GM12878 (cell line): ENCODE measurements at regions of chr16 and their contacts with region 1.

Region 1: DNA sequence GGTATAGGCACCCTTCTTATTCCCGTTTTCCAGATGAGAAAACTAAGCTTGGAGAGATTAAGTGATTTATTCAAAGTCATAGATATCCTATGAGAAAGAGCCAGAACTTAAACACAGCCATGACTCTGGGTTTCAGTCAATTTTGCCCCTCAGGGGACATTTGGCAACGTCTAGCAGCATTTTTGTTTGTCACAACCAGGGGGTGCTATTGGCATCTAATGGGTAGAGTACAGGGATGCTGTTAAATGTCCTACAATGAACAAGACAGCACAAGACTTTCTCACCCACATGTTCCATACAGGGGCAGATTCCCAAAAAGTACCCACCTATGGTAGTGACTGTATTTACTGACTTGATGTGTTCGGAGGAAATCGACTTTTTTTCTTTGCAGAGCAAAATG is 4.8 kb upstream of the SHISA9 start:
- DNase-seq: no peak
- ATAC-seq: peak; percentile 89
- H3K4me3 ChIP-seq: no peak overlapping the region
- H3K27ac ChIP-seq: no peak overlapping the region
- H3K4me1 ChIP-seq: no peaks in the 10 kb centered on the region
- H3K27me3 ChIP-seq: peaks cover 0 to 9% of the 10 kb centered on the region in 2 experiments; a peak in 3 of 4 replicates
- CTCF ChIP-seq: peak; percentile 61 to 63 (median 63)
- EP300 ChIP-seq: no peak
- POLR2A ChIP-seq: no peak
- RAD21 ChIP-seq: peak; percentile 88

Region 2: DNA sequence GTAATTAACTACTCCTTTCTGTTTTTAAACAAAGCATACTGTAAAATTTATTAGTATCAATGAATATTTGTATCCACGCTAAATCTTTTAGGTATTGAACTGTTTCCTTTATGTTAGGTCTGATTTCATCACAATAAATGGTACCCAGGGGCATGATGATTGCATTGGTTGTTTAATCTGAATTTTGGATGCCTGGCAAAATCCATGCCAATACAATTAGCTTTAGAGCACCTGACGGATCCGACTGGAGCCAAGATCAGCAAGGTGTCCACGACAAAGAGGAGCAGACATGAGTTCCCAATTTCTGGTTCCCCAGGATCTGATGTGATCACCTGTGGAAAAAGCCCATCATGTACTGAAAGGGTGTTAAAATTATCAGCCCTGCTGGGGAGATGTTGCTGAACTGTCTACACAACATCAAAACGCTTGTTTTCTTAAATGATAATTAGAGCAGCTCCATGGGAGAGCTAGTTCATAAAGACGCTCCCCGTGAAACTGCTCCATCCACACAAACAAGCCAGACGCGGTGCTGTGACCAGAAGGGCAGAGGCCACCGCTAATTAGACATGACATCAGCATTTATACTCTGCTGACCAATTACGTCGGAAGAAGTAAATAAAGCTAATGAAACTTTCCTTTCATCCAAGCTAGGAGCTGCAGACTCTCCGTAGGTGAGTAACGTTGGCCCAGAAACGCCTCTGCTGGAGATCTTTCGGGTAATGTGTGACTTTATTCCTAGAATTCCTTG is 244.6 kb before region 1 on chr16:
- CTCF ChIA-PET with region 1: no interaction called
- POLR2A ChIA-PET with region 1: no interaction called
- RAD21 ChIA-PET with region 1: no interaction called
- SMC1A ChIA-PET with region 1: no interaction called
- in situ Hi-C with region 1: no loop called
- intact Hi-C with region 1: no loop called
- DNase-seq: no peak
- ATAC-seq: no peak
- H3K4me3 ChIP-seq: no peak overlapping the region
- H3K27ac ChIP-seq: no peak overlapping the region
- H3K4me1 ChIP-seq: no peaks in the 10 kb centered on the region
- H3K27me3 ChIP-seq: no peaks in the 10 kb centered on the region
- CTCF ChIP-seq: no peak
- EP300 ChIP-seq: no peak
- POLR2A ChIP-seq: no peak
- RAD21 ChIP-seq: no peak

Region 3: DNA sequence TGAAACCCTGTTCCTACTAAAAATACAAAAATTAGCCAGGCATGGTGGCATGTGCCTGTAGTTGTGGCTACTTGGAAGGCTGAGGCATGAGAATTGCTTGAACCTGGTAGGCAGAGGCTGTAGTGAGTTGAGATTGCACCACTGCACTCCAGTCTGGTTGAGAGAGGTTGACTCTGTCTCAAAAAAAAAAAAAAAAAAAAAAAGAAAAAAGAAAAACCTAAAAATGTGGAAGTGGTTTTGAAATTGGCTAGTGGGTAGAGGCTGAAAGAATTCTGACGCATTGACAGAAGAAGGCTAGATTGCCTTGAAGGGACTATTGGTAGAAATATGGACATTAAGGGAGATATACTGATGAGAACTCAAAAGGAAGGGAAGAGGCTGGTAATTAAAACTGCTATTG is 59.3 kb before region 1 on chr16:
- CTCF ChIA-PET with region 1: no interaction called
- POLR2A ChIA-PET with region 1: no interaction called
- RAD21 ChIA-PET with region 1: no interaction called
- SMC1A ChIA-PET with region 1: no interaction called
- in situ Hi-C with region 1: no loop called
- intact Hi-C with region 1: no loop called
- DNase-seq: no peak
- ATAC-seq: no peak
- H3K4me3 ChIP-seq: no peak overlapping the region
- H3K27ac ChIP-seq: no peak overlapping the region
- H3K4me1 ChIP-seq: no peaks in the 10 kb centered on the region
- H3K27me3 ChIP-seq: no peaks in the 10 kb centered on the region
- CTCF ChIP-seq: no peak
- EP300 ChIP-seq: no peak
- POLR2A ChIP-seq: no peak
- RAD21 ChIP-seq: no peak

Region 4: GRCh38 chr16:12874186-12874585 is 22.4 kb before region 1 on chr16:
- CTCF ChIA-PET with region 1: no interaction called
- POLR2A ChIA-PET with region 1: no interaction called
- RAD21 ChIA-PET with region 1: no interaction called
- SMC1A ChIA-PET with region 1: no interaction called
- in situ Hi-C with region 1: no loop called
- intact Hi-C with region 1: no loop called
- DNase-seq: no peak
- ATAC-seq: no peak
- H3K4me3 ChIP-seq: no peak overlapping the region
- H3K27ac ChIP-seq: no peak overlapping the region
- H3K4me1 ChIP-seq: no peaks in the 10 kb centered on the region
- H3K27me3 ChIP-seq: no peaks in the 10 kb centered on the region
- CTCF ChIP-seq: no peak
- EP300 ChIP-seq: no peak
- POLR2A ChIP-seq: no peak
- RAD21 ChIP-seq: no peak

Region 5: DNA sequence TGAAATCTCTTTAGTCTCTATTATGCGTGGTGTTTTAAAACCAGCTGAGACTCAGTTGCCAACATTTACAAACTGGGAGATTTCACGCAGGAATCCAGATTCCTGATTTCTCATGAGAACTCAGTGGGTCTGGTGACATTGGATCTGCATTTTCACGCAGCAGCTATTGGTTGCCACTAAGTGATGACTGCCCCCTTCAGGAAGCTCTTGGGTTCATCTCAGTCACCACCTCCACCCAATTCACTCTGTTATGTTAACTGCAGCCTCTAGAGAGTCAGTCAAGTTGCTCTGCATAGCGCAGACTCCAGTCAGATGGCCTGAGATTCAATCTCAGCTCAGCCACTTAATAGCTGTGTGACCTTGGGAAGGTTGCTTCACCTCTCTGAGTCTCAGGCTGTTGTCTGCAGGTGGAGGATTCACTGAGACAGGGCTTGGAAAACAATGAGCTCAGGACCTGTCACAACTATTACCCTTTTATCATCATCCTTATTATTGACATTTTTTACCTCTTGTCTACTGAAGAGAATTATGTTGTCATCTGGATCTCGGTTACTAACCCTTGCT is 11.2 kb after region 1 on chr16:
- CTCF ChIA-PET with region 1: interaction called, 24 read pairs
- POLR2A ChIA-PET with region 1: no interaction called
- RAD21 ChIA-PET with region 1: no interaction called
- SMC1A ChIA-PET with region 1: interaction called, 16 read pairs
- in situ Hi-C with region 1: no loop called
- intact Hi-C with region 1: no loop called
- DNase-seq: no peak
- ATAC-seq: peak; percentile 71
- H3K4me3 ChIP-seq: no peak overlapping the region
- H3K27ac ChIP-seq: no peak overlapping the region
- H3K4me1 ChIP-seq: no peaks in the 10 kb centered on the region
- H3K27me3 ChIP-seq: peaks cover 5 to 13% of the 10 kb centered on the region in 2 experiments
- CTCF ChIP-seq: peak; percentile 28 to 41 (median 30); a peak in 4 of 6 replicates
- EP300 ChIP-seq: no peak
- POLR2A ChIP-seq: no peak
- RAD21 ChIP-seq: peak; percentile 32

Region 6: GRCh38 chr16:13120557-13120956 is 224.0 kb after region 1 on chr16:
- CTCF ChIA-PET with region 1: interaction called, 10 read pairs
- POLR2A ChIA-PET with region 1: interaction called, 3 read pairs
- RAD21 ChIA-PET with region 1: no interaction called
- SMC1A ChIA-PET with region 1: interaction called, 7 read pairs
- in situ Hi-C with region 1: no loop called
- intact Hi-C with region 1: no loop called
- DNase-seq: no peak
- ATAC-seq: no peak
- H3K4me3 ChIP-seq: no peak overlapping the region
- H3K27ac ChIP-seq: no peak overlapping the region
- H3K4me1 ChIP-seq: no peaks in the 10 kb centered on the region
- H3K27me3 ChIP-seq: no peaks in the 10 kb centered on the region
- CTCF ChIP-seq: no peak
- EP300 ChIP-seq: no peak
- POLR2A ChIP-seq: no peak
- RAD21 ChIP-seq: no peak

Region 7: GRCh38 chr16:13436641-13437412 is 540.3 kb after region 1 on chr16:
- CTCF ChIA-PET with region 1: interaction called, 7 read pairs
- POLR2A ChIA-PET with region 1: no interaction called
- RAD21 ChIA-PET with region 1: interaction called, 35 read pairs
- SMC1A ChIA-PET with region 1: interaction called, 9 read pairs
- in situ Hi-C with region 1: no loop called
- intact Hi-C with region 1: no loop called
- DNase-seq: peak; percentile 86
- ATAC-seq: peak; percentile 85
- H3K4me3 ChIP-seq: no peak overlapping the region
- H3K27ac ChIP-seq: peak overlapping the region; percentile 46
- H3K4me1 ChIP-seq: peaks cover 25% of the 10 kb centered on the region
- H3K27me3 ChIP-seq: no peaks in the 10 kb centered on the region
- CTCF ChIP-seq: no peak; a peak in 1 of 6 replicates
- EP300 ChIP-seq: peak; percentile 53 to 88; a peak in 3 of 4 replicates
- POLR2A ChIP-seq: no peak
- RAD21 ChIP-seq: peak; percentile 13; the same call in 1 of the 2 replicates

Region 8: GRCh38 chr16:13873835-13874438 is 977.4 kb after region 1 on chr16:
- CTCF ChIA-PET with region 1: interaction called, 12 read pairs
- POLR2A ChIA-PET with region 1: no interaction called
- RAD21 ChIA-PET with region 1: interaction called, 4 read pairs
- SMC1A ChIA-PET with region 1: interaction called, 9 read pairs
- in situ Hi-C with region 1: no loop called
- intact Hi-C with region 1: loop called (anchors 5 kb)
- DNase-seq: no peak
- ATAC-seq: no peak
- H3K4me3 ChIP-seq: no peak overlapping the region
- H3K27ac ChIP-seq: no peak overlapping the region
- H3K4me1 ChIP-seq: no peaks in the 10 kb centered on the region
- H3K27me3 ChIP-seq: 0 out of 4 replicates have a peak, but pooled peaks cover 0 to 2% of the 10 kb centered on the region in 2 experiments
- CTCF ChIP-seq: peak; percentile 27 to 46 (median 32); a peak in 4 of 6 replicates
- EP300 ChIP-seq: no peak
- POLR2A ChIP-seq: no peak
- RAD21 ChIP-seq: peak; percentile 58